Activated CD4-positive, alpha-beta memory T cell treated with anti-CD3 and anti-CD28 coated beads for 36 hours (primary cell): ENCODE measurements at regions of chr2 and their contacts with region 1.

Region 1: GRCh38 chr2:9843229-9844035 is at the start of gene TAF1B:
- DNase-seq: peak; percentile 92
- H3K4me3 Mint-ChIP-seq: peak within 1 kb of the TSS; percentile 91
- H3K27ac Mint-ChIP-seq: peak within 1 kb of the TSS; percentile 89
- H3K4me1 Mint-ChIP-seq: peaks cover 42% of the 10 kb centered on the region
- H3K27me3 Mint-ChIP-seq: no peaks in the 10 kb centered on the region
- total RNA-seq, gene TAF1B: 32.6 TPM

Region 2: DNA sequence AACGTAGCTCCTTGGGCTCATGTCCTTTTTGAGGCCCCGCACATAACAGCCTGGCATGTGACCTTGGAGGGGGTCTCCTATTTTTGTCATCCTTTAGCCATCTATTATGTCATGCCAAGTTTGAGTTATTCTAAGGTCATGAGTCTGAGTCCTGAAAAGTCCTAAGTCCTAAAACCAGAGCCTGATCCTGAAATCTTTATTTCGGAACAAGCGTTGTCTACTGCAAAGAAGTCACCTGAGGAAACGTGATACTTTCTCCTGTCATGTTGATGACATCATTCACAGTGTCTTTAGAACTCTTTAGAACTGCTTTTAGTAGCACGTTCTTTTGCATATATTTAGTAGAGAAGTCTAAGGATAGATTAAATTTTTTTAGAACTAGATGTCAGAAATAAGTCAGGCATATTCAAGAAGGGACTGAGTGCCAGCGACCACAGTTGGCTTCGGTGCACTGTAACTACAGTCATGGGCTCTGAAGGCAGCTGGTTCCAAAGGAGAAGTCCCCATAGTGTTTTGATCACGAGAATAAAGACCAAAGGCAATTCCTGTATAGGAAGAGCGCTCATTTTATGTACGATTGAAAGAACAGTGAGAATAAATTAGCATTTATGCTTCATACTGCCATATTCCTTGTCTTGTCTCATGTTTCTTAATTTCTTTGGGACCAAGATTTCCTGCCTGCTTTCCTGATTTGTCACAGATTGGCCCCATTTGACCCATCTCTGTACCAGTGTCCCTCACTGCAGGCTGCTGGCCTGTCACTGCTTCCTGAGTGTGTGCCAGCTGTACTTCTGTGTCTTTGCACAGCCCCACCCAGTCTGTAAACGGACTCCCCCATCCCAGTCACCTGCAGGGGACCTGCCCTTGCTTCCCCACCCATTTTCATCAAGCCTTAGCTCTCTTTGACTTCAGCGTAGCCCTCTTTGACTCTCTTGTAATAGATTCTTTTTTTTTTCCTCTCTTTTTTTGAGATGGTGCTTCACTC is 561.0 kb before region 1 on chr2:
- CTCF ChIA-PET with region 1: no interaction called
- POLR2A ChIA-PET with region 1: no interaction called
- intact Hi-C with region 1: no loop called
- DNase-seq: no peak
- H3K4me3 Mint-ChIP-seq: no peak overlapping the region
- H3K27ac Mint-ChIP-seq: no peak overlapping the region
- H3K4me1 Mint-ChIP-seq: no peaks in the 10 kb centered on the region
- H3K27me3 Mint-ChIP-seq: peaks cover 6% of the 10 kb centered on the region

Region 3: DNA sequence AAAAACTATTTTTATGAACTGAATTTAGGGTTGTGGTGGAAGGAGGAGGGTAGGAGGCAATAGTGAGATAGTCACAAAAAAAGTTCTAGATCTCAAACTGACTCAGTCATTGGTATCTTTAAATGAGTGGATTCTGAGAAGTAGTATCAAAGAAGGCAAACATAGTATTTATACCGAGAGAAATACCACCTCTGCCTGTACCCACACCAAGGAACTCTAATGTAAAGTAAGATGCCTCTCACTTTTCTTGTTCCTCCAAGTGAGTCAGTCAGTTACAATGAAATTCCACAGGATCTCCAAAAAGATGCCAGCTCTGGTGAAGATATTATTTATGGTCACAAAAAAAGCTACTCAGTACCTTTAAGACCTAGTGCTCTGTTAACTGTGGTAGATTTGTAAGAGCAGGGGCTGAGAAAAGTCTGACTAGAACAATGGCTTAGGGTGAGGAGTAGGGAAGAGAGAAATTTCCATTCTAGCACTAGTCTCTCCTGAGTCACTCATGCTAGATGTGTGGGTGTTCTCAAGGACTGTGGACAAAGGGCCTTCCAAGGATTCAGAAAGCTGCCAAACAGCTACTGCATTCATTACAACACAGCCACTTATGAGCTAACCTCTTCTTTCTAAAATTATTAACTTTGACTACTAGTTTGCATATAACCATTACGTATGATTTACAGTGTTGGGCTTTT is 248.9 kb before region 1 on chr2:
- CTCF ChIA-PET with region 1: no interaction called
- POLR2A ChIA-PET with region 1: no interaction called
- intact Hi-C with region 1: no loop called
- DNase-seq: no peak
- H3K4me3 Mint-ChIP-seq: no peak overlapping the region
- H3K27ac Mint-ChIP-seq: peak overlapping the region; percentile 83
- H3K4me1 Mint-ChIP-seq: peaks cover 81% of the 10 kb centered on the region
- H3K27me3 Mint-ChIP-seq: no peaks in the 10 kb centered on the region

Region 4: GRCh38 chr2:9778012-9778411 is 65.4 kb before region 1 on chr2:
- CTCF ChIA-PET with region 1: no interaction called
- POLR2A ChIA-PET with region 1: interaction called, 12 read pairs
- intact Hi-C with region 1: loop called (anchors 1 kb)
- DNase-seq: peak; percentile 55
- H3K4me3 Mint-ChIP-seq: no peak overlapping the region
- H3K27ac Mint-ChIP-seq: peak overlapping the region; percentile 38
- H3K4me1 Mint-ChIP-seq: peaks cover 47% of the 10 kb centered on the region
- H3K27me3 Mint-ChIP-seq: no peaks in the 10 kb centered on the region

Region 5: GRCh38 chr2:9897331-9897737 is 53.9 kb after region 1 on chr2:
- CTCF ChIA-PET with region 1: no interaction called
- POLR2A ChIA-PET with region 1: interaction called, 10 read pairs
- intact Hi-C with region 1: loop called (anchors 1 kb)
- DNase-seq: peak; percentile 89
- H3K4me3 Mint-ChIP-seq: no peak overlapping the region
- H3K27ac Mint-ChIP-seq: peak overlapping the region; percentile 58
- H3K4me1 Mint-ChIP-seq: peaks cover 25% of the 10 kb centered on the region
- H3K27me3 Mint-ChIP-seq: no peaks in the 10 kb centered on the region

Region 6: DNA sequence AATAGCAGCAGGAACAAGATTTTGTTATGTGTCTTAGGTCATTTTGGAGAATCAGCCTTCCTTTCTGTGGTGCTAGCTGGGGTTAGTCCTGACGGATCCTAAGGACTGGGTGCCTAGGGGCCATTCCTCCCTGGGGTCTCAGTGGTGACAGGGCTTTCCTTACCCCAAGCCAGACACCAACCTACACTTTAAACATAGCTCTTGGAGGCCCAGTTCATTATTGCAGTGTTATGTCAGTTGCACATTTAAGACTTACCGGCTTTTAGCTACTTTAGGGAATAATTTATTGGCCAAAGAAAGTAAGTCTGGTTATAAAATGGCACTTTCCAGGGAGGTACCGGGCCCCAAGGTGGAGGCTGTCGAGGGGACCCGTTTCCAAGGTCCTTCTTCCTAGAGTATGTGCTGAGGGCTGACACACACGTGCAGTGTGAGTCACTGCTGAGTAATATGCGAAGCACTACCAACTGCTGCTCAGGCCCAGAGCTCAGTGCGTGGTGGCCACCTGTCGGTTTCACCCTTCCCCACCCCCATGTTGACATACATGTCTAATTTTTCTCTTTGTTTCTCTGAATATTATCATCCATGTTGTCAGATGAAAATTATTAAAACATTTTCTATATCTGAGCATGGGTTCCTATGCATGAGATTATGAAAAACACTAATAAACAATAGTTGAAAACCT is 71.1 kb after region 1 on chr2:
- CTCF ChIA-PET with region 1: interaction called, 4 read pairs
- POLR2A ChIA-PET with region 1: interaction called, 5 read pairs
- intact Hi-C with region 1: loop called (anchors 1 kb)
- DNase-seq: peak; percentile 83
- H3K4me3 Mint-ChIP-seq: no peak overlapping the region
- H3K27ac Mint-ChIP-seq: no peak overlapping the region
- H3K4me1 Mint-ChIP-seq: peaks cover 10% of the 10 kb centered on the region
- H3K27me3 Mint-ChIP-seq: no peaks in the 10 kb centered on the region

Region 7: GRCh38 chr2:9951272-9951972 is 108.0 kb after region 1 on chr2 and contains the start of gene GRHL1:
- CTCF ChIA-PET with region 1: no interaction called
- POLR2A ChIA-PET with region 1: no interaction called
- intact Hi-C with region 1: loop called (anchors 2 kb)
- DNase-seq: peak; percentile 93
- H3K4me3 Mint-ChIP-seq: peak within 1 kb of the TSS; percentile 74
- H3K27ac Mint-ChIP-seq: no peak within 1 kb of the TSS
- H3K4me1 Mint-ChIP-seq: peaks cover 5% of the 10 kb centered on the region
- H3K27me3 Mint-ChIP-seq: peaks cover 30% of the 10 kb centered on the region
- total RNA-seq, gene GRHL1: 1.00 to 1.1 TPM

Region 8: GRCh38 chr2:10019174-10019573 is 175.7 kb after region 1 on chr2:
- CTCF ChIA-PET with region 1: no interaction called
- POLR2A ChIA-PET with region 1: no interaction called
- intact Hi-C with region 1: no loop called
- DNase-seq: no peak
- H3K4me3 Mint-ChIP-seq: no peak overlapping the region
- H3K27ac Mint-ChIP-seq: no peak overlapping the region
- H3K4me1 Mint-ChIP-seq: no peaks in the 10 kb centered on the region
- H3K27me3 Mint-ChIP-seq: peaks cover 3% of the 10 kb centered on the region